Activated CD4-positive, alpha-beta memory T cell treated with anti-CD3 and anti-CD28 coated beads, Interleukin-2, amount 10 ng/mL, durations not matched to agents 7 days and 5 days (primary cell): ENCODE measurements at regions of chr10 and their contacts with region 1.

Region 1: GRCh38 chr10:46030091-46030937 is at the start of gene NCOA4:
- DNase-seq: peak; percentile 98
- H3K4me3 Mint-ChIP-seq: peak within 1 kb of the TSS; percentile 98
- H3K27ac Mint-ChIP-seq: peak within 1 kb of the TSS; percentile 84
- H3K4me1 Mint-ChIP-seq: peaks cover 44% of the 10 kb centered on the region
- H3K27me3 Mint-ChIP-seq: peaks cover 3% of the 10 kb centered on the region
- total RNA-seq, gene NCOA4: 104 to 105 TPM

Region 2: GRCh38 chr10:46006219-46006618 is 24.1 kb before region 1 on chr10:
- CTCF ChIA-PET with region 1: interaction called, 12 read pairs
- POLR2A ChIA-PET with region 1: interaction called, 3 read pairs
- DNase-seq: no peak
- H3K4me3 Mint-ChIP-seq: no peak overlapping the region
- H3K27ac Mint-ChIP-seq: no peak overlapping the region
- H3K4me1 Mint-ChIP-seq: no peaks in the 10 kb centered on the region
- H3K27me3 Mint-ChIP-seq: no peaks in the 10 kb centered on the region

Region 3: DNA sequence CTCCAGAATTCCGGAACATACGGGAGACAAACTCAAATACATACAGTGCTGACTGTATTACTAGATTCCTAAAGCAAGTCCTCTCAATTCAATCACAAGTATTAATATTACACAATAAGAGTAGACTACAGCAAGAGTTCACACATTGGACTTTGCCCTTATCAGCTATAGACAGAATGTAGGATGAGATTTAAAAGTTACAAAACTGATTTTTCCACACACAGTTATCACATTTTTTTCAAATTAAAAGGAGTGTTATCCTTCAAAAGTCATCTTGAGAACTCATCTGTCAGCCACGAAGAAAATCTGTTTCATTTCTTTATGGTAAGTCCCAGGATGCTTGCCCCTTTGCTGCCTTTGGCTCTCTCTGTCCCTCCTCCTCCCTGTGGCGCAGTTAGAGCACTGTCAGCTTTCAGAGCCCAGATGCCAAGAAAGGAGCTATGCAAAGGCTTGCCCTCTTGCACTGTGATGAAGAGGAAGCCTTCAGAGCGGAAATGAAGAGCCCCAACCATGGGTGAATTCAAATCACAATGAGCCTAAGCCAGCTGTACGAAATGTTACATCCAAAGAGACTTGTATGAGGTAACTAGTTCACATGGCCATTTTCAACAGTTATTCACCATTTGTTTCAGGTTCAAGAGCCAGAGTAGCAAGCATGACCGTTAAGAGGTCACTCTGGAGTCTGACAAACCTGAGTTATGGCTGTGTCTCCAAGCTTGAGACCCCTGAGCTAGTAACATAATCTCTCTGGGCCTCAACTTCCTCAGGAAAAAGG is 10.6 kb before region 1 on chr10:
- CTCF ChIA-PET with region 1: interaction called, 21 read pairs
- POLR2A ChIA-PET with region 1: interaction called, 4 read pairs
- DNase-seq: no peak
- H3K4me3 Mint-ChIP-seq: no peak overlapping the region
- H3K27ac Mint-ChIP-seq: peak overlapping the region; percentile 60
- H3K4me1 Mint-ChIP-seq: peaks cover 60% of the 10 kb centered on the region
- H3K27me3 Mint-ChIP-seq: no peaks in the 10 kb centered on the region

Region 4: DNA sequence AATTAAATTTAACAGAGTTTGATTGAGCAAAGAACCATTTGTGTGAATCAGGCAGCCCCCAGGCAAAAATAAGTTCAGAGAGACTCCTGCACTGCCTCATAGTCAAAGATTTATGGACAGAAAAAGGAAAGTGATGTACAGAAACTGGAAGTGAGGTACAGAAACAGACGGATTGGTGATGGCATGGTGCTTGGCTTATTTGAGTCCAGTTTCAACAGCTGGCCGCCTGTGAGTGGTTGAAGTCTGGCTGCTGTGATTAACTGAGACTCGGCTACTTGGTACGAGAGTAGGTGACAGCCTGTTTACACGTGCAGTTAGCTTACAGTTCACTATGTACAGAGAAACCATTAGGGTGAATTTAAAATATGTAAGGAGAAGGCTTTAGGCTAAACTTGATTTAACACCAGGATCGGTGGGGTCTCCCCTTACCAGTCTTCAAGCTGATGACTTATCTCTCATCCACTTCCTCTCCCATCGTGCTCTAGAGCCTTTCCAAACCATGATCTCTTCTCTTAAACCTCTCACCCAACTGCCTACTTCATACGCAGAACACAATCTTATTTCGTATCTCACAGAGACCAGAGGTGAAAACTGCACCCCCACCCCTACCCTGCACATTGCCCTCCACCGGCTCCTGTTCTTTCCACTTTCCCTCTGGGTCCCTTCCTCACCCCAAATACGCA is 20.8 kb after region 1 on chr10:
- CTCF ChIA-PET with region 1: no interaction called
- POLR2A ChIA-PET with region 1: no interaction called
- DNase-seq: no peak
- H3K4me3 Mint-ChIP-seq: no peak overlapping the region
- H3K27ac Mint-ChIP-seq: no peak overlapping the region
- H3K4me1 Mint-ChIP-seq: no peaks in the 10 kb centered on the region
- H3K27me3 Mint-ChIP-seq: peaks cover 6% of the 10 kb centered on the region

Region 5: DNA sequence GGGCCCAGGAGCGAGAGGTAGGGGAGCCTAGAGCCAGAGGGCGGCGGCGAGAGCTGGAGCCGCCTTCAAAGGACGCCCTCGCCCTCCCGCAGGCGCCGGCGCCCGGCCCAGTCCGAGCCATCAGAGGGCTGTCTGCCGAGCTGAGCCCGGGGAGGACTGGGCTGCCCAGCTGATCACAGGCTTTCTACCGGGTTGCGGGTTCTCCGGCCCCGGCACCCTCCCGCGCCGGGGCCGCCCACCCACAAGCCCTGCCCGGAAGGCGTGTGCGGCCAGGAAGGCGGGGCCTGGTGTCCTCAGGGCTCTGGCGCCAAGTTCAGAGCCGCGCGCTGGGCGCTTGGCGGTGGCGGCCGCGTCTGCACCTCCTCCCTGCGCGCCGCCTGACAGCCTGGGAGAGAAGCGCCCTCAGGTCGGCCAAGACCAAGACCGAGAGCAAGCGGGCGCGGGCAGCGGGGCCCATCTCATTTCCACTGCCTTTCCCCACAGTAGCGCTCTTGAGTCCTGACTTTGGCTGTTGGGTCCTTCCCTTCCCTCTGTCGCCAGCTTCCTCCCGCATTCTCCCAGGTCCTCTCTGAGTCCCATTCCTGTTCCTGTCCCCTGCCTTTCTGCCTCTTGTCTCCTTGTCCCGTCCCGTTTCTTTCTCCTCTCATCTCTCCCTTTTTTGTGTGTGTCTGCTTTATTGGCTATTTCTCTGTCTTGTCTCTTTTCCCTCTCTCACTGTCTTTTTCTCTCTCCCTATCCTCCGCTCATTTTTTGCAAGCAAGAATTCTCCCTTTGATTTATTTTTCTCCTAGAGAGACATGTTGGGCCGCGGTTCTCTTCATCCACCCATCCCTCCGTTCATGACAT is 76.3 kb after region 1 on chr10:
- CTCF ChIA-PET with region 1: no interaction called
- POLR2A ChIA-PET with region 1: no interaction called
- DNase-seq: peak; percentile 56
- H3K4me3 Mint-ChIP-seq: peak overlapping the region; percentile 70
- H3K27ac Mint-ChIP-seq: no peak overlapping the region
- H3K4me1 Mint-ChIP-seq: peaks cover 10% of the 10 kb centered on the region
- H3K27me3 Mint-ChIP-seq: peaks cover 17% of the 10 kb centered on the region